ENCODE measurements at regions of chr18 and their contacts with region 1.

Region 1: DNA sequence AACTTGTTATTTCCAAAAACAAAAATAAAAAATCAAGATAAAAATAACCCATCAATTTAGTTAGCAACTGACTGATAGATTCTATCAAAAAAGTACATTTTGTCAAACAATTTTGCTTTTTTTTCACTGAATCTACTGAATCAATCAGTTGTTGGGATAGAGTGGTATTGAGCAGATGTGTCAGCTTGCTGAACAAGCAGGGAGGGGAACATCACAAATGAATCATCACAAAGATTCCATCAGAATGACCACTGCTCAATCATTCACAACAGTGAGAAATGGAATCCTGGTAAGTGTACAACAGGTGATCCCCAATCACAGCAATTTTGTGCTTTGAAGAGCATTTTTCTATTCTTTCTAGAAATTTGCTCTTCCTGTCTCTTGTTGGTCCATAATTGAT is 12.3 kb upstream of the SLC14A2 start:
- DNase-seq: no peak
- ATAC-seq: no peak
- H3K4me3 Mint-ChIP-seq: no peak overlapping the region
- H3K27ac Mint-ChIP-seq: no peak overlapping the region
- H3K4me1 Mint-ChIP-seq: peaks cover 19% of the 10 kb centered on the region
- H3K27me3 Mint-ChIP-seq: no peaks in the 10 kb centered on the region
- CTCF ChIP-seq: no peak

Region 2: DNA sequence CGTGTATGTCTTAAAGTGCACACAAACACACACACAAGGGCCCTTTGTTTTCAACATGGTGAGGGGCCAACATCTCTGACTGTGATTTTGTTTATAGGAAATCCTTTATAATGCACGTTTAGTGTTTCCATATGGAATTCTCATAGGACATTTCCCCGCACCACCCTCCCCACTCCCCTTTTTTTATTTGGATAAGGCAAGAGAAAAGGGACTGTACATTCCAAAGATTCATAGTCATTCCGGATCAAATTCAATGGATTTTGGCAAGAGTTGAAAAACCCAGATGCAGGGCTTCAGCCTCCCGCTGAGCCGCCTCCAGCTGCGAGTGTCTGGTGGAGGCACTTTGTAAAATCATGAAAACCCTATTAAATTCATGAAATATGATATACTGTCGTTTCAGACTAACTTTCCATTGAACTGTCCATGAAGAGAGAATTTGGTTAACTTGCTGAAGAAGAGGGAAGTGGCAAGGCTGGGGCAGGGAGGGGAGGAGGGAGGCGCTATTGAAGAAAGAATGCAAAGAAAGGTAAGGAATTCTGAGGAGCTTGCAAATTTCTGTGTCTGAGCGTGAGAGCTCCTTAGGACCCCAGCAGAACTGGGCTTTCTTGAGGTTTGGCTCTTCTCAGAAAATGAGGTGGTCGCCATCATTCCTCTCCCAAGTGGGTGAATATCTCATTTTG is 13.4 kb before region 1 on chr18:
- CTCF ChIA-PET with region 1: interaction called, 13 read pairs
- POLR2A ChIA-PET with region 1: no interaction called
- DNase-seq: no peak
- ATAC-seq: peak; percentile 82
- H3K4me3 Mint-ChIP-seq: peak overlapping the region; percentile 39
- H3K27ac Mint-ChIP-seq: peak overlapping the region; percentile 62; the same call in 1 of the 2 replicates
- H3K4me1 Mint-ChIP-seq: peaks cover 28% of the 10 kb centered on the region
- H3K27me3 Mint-ChIP-seq: no peaks in the 10 kb centered on the region
- CTCF ChIP-seq: no peak

Region 3: GRCh38 chr18:45745817-45746461 is 143.0 kb after region 1 on chr18:
- CTCF ChIA-PET with region 1: no interaction called
- POLR2A ChIA-PET with region 1: no interaction called
- DNase-seq: no peak
- ATAC-seq: no peak
- H3K4me3 Mint-ChIP-seq: no peak overlapping the region
- H3K27ac Mint-ChIP-seq: no peak overlapping the region
- H3K4me1 Mint-ChIP-seq: peaks cover 20% of the 10 kb centered on the region
- H3K27me3 Mint-ChIP-seq: no peaks in the 10 kb centered on the region; the same call in 1 of the 2 replicates
- CTCF ChIP-seq: no peak